ENCODE measurements at regions of chr1 and their contacts with region 1.

Region 1: DNA sequence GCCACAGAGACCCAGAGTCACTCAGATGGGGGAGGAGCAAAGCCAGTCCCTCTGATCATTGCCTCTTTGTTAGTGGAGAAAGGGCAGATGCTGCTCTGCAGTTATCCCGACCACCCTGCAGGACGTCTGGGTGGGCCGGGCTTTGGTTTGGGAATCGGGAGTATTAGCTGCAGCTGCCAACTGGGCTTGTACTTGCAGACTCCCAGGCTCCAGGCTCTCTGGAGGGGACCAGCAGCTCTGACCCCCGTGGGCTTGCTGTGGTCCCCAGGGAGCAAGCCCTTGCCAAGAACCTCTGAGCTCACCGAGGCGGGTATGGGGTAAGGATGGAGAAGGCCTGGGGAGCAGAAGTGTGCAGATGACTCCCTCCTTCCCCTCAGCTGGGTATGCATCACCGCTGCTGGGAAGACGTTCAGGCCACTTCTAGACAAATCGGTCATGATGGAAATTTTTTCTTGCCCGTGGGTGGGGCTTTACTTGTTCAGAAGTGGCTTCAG is 21.6 kb downstream of the MAPKAPK2 start:
- DNase-seq: peak; percentile 84
- H3K4me3 Mint-ChIP-seq: no peak overlapping the region
- H3K27ac Mint-ChIP-seq: peak overlapping the region; percentile 71
- H3K4me1 Mint-ChIP-seq: peaks cover 84% of the 10 kb centered on the region
- H3K27me3 Mint-ChIP-seq: no peaks in the 10 kb centered on the region

Region 2: GRCh38 chr1:206556750-206557635 is 149.4 kb before region 1 on chr1:
- CTCF ChIA-PET with region 1: no interaction called
- intact Hi-C with region 1: loop called (anchors 5 kb)
- DNase-seq: peak; percentile 92
- H3K4me3 Mint-ChIP-seq: peak overlapping the region; percentile 96
- H3K27ac Mint-ChIP-seq: peak overlapping the region; percentile 100
- H3K4me1 Mint-ChIP-seq: peaks cover 61% of the 10 kb centered on the region
- H3K27me3 Mint-ChIP-seq: no peaks in the 10 kb centered on the region

Region 3: DNA sequence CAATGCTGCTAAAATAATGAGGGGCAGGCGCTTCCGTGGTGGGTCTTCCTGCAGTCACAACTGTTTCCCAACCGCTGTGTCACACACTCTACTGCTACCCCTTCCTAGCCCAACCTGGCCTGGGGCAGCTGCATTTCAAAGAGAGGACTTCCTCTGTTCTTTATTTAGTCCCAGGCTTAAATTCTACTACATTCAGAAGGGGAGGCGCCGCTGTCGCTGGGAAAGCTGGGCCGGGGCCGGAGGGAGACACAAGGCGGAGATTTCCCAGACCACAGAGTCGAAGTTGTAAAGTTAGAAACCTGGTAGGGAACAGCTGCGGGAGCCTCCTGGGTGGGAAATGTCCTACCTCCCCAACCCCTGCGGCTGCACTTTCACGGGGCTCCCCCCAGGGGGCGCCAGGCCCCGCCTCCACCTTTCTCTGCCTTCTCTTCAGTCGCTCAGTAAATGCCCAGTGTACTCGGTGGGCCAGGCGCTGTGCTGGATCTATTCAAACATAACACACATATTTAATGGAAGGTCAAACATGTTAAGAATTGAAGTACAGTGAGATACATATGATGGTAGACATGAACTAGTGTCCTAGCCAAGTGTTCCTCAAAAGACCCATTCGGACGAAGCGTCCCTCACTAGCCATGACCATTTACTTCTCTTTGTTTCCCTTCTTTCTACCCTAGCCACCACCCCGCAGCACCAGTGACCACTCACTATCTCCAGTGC is 47.9 kb before region 1 on chr1:
- CTCF ChIA-PET with region 1: interaction called, 9 read pairs
- intact Hi-C with region 1: loop called (anchors 2 kb)
- DNase-seq: peak; percentile 69
- H3K4me3 Mint-ChIP-seq: no peak overlapping the region
- H3K27ac Mint-ChIP-seq: no peak overlapping the region
- H3K4me1 Mint-ChIP-seq: peaks cover 33% of the 10 kb centered on the region
- H3K27me3 Mint-ChIP-seq: peaks cover 24% of the 10 kb centered on the region

Region 4: DNA sequence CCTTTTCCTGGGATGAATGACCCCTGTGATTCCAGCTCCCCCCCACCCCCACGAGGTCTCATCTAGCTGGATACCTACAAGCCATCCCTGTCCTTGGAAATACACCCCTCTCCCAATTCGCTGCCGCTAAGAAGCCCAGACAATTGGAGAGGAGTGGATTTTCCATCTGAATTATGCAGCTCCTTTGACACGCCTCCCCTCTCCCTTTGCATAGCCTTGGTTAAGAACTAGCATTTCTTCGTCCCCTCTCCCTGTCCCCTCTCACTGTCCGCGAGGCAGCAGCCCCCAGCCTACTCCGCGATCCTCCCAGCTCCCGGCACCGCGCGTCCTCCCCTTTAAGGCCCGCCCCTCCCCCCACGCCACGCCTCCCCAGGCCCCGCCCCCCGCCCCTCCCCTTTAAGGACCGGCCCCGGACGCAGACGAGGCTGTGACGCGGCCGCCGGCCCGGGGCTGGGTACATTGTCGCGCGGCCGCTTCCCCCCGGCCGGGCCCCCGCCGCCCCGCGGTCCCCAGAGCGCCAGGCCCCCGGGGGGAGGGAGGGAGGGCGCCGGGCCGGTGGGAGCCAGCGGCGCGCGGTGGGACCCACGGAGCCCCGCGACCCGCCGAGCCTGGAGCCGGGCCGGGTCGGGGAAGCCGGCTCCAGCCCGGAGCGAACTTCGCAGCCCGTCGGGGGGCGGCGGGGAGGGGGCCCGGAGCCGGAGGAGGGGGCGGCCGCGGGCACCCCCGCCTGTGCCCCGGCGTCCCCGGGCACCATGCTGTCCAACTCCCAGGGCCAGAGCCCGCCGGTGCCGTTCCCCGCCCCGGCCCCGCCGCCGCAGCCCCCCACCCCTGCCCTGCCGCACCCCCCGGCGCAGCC is 21.6 kb before region 1 on chr1 and contains the start of gene MAPKAPK2:
- CTCF ChIA-PET with region 1: interaction called, 15 read pairs
- intact Hi-C with region 1: loop called (anchors 1 kb)
- DNase-seq: peak; percentile 75
- H3K4me3 Mint-ChIP-seq: peak within 1 kb of the TSS; percentile 88
- H3K27ac Mint-ChIP-seq: peak within 1 kb of the TSS; percentile 91
- H3K4me1 Mint-ChIP-seq: peaks cover 52% of the 10 kb centered on the region
- H3K27me3 Mint-ChIP-seq: peaks cover 2% of the 10 kb centered on the region
- total RNA-seq, gene MAPKAPK2: 83.4 to 85.3 TPM

Region 5: DNA sequence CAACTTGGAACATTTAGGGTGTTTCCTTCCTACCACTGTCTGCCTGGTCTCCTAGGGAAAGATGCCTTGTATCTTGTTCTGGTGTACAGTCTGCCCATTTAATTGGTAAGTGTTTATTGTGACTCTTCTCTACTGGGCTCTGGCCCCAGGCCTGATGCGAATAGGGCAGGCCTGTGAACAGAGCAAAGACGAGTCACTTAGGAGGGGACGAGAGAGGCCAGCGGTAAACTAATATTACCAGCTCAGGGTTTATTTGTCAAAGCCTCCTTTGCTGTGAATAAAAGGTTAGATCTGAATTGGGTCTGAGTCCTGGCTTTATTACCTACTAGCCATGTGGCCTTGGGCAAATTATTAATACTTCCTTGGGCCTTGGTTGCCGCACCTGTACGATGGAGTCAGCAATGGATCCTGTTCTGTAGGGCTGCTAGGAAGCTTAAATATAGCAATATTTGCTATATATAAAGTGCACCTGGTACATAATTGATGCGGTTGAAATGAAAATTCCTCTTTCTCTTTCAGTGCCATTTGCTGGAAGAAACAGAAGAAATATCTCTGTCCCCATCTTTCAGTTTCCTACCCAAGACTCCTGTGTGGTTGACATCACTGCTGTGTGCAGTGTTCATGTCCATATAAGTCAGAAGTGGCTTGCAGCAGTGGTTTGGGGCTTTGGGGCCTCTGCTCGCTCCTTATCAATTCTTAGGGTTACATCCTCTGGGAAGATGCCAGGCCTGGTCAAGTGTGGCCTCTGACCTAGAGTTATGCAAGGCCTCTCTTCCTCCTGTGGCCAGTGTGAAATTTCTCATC is 10.7 kb after region 1 on chr1:
- CTCF ChIA-PET with region 1: interaction called, 4 read pairs
- intact Hi-C with region 1: loop called (anchors 1 kb)
- DNase-seq: peak; percentile 37
- H3K4me3 Mint-ChIP-seq: no peak overlapping the region
- H3K27ac Mint-ChIP-seq: peak overlapping the region; percentile 22
- H3K4me1 Mint-ChIP-seq: peaks cover 65% of the 10 kb centered on the region
- H3K27me3 Mint-ChIP-seq: no peaks in the 10 kb centered on the region

Region 6: GRCh38 chr1:206725109-206725963 is 19.0 kb after region 1 on chr1:
- CTCF ChIA-PET with region 1: interaction called, 23 read pairs
- intact Hi-C with region 1: no loop called
- DNase-seq: peak; percentile 84
- H3K4me3 Mint-ChIP-seq: no peak overlapping the region
- H3K27ac Mint-ChIP-seq: no peak overlapping the region
- H3K4me1 Mint-ChIP-seq: peaks cover 39% of the 10 kb centered on the region
- H3K27me3 Mint-ChIP-seq: no peaks in the 10 kb centered on the region

Region 7: GRCh38 chr1:206741142-206741701 is 34.9 kb after region 1 on chr1:
- CTCF ChIA-PET with region 1: no interaction called
- intact Hi-C with region 1: no loop called
- DNase-seq: no peak
- H3K4me3 Mint-ChIP-seq: no peak overlapping the region
- H3K27ac Mint-ChIP-seq: no peak overlapping the region
- H3K4me1 Mint-ChIP-seq: peaks cover 63% of the 10 kb centered on the region
- H3K27me3 Mint-ChIP-seq: no peaks in the 10 kb centered on the region

Region 8: DNA sequence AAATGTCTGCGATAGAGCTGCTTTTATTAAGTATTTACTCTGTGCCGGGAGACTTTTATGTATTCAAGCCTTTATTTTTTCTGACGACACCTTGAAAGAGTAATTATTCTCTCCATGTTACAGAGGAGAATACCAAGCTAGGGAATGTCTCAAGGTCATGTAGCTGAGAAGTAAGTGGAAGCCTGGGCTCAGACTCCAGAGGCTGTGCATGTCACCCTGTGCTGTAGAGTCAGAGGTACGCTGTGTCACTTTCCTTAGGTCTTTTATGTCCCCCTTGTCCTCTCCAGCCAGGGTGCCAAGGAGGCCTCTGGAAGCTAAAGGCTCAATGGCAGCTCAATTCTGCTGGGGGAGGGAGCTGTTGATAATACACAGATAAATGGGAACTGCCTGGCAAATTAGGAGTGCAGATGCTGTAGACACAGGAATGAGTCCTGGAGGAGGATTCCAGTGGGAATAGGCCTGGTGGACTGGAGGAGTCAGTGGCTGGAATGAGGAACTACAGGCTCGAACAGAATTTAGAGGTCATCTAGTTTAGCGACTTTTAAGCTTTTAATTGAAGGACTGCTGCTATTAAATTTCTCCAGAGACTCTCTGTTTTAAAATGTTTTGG is 54.9 kb after region 1 on chr1:
- CTCF ChIA-PET with region 1: interaction called, 3 read pairs
- intact Hi-C with region 1: loop called (anchors 2 kb)
- DNase-seq: no peak
- H3K4me3 Mint-ChIP-seq: no peak overlapping the region
- H3K27ac Mint-ChIP-seq: no peak overlapping the region
- H3K4me1 Mint-ChIP-seq: peaks cover 22% of the 10 kb centered on the region
- H3K27me3 Mint-ChIP-seq: no peaks in the 10 kb centered on the region

Measured in activated naive CD4-positive, alpha-beta T cell treated with anti-CD3 and anti-CD28 coated beads for 36 hours (primary cell).